PC-9 (cell line): ENCODE measurements at regions of chr2 and their contacts with region 1.

Region 1: DNA sequence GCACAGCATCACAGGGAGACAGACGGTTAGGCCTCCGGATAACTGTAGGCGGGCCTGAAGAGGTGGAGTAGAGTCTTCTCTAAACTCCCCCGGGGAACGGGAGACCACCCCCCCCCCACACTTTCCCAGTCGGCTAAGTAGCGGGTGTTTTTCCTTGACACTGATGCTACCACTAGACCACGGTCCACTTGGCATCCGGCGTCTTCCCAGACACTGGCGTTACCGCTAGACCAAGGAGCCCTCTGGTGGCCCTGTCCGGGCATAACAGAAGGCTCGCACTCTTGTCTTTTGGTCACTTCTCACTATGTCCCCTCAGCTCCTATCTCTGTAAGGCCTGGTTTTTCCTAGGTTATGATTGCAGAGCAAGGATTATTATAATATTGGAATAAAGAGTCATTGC is 25.7 kb upstream of the NCL start:
- DNase-seq: peak in 1 of 2 experiments; percentile 48
- H3K4me3 ChIP-seq: no peak overlapping the region
- H3K27ac ChIP-seq: no peak overlapping the region
- H3K4me1 ChIP-seq: no peaks in the 10 kb centered on the region
- H3K27me3 ChIP-seq: no peaks in the 10 kb centered on the region
- CTCF ChIP-seq: peak; percentile 54

Region 2: GRCh38 chr2:231475965-231476364 is 14.0 kb before region 1 on chr2:
- CTCF ChIA-PET with region 1: no interaction called
- POLR2A ChIA-PET with region 1: no interaction called
- intact Hi-C with region 1: no loop called
- DNase-seq: no peak
- H3K4me3 ChIP-seq: no peak overlapping the region
- H3K27ac ChIP-seq: no peak overlapping the region
- H3K4me1 ChIP-seq: no peaks in the 10 kb centered on the region
- H3K27me3 ChIP-seq: no peaks in the 10 kb centered on the region
- CTCF ChIP-seq: no peak

Region 3: DNA sequence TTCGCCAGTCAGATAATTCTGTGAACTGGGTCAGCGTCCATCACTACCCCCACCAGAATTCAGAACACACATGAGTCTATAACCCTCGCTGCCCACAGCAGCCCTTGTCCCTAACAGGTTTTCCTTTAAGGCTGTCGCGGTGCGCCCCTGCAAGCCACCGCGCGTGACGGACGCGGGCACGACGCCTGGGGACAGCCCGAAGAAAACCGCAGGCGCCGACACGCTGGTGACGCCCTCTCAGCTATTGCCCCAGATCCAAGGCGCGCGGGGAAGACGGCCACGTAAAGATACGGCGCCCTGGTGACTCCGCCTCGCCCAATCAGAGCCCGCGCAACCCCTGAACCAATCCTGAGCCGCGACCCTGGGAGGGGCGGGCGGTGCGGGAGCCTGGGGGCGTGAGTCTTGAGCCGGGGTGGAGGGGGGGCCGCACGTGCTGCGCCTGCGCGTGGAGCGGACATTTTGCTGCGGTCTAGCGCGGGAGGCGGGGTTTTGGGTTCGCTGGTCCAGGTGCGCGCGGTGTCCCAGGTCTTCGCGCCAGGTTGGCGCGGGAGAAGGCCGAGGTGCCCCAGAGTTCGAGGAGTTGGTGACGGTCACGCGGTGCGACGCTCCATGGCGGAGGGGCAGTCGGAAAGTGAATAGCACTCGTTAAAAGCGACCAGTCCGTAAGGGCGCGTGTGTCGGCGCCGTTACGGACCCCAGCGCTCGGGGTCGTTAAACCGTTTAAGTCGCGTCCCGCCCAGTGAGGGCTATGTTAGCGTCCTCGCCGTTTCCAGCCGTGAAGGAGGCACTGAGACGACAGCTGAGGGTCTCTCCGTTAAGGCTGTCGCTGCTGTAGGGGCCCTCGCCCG is 24.3 kb after region 1 on chr2:
- CTCF ChIA-PET with region 1: no interaction called
- POLR2A ChIA-PET with region 1: no interaction called
- intact Hi-C with region 1: no loop called
- DNase-seq: peak; percentile 85 to 98
- H3K4me3 ChIP-seq: peak overlapping the region; percentile 91
- H3K27ac ChIP-seq: peak overlapping the region; percentile 70
- H3K4me1 ChIP-seq: peaks cover 15% of the 10 kb centered on the region
- H3K27me3 ChIP-seq: no peaks in the 10 kb centered on the region
- CTCF ChIP-seq: no peak

Region 4: GRCh38 chr2:231573698-231574421 is 83.9 kb after region 1 on chr2:
- CTCF ChIA-PET with region 1: no interaction called
- POLR2A ChIA-PET with region 1: no interaction called
- intact Hi-C with region 1: no loop called
- DNase-seq: no peak
- H3K4me3 ChIP-seq: no peak overlapping the region
- H3K27ac ChIP-seq: no peak overlapping the region
- H3K4me1 ChIP-seq: no peaks in the 10 kb centered on the region
- H3K27me3 ChIP-seq: no peaks in the 10 kb centered on the region
- CTCF ChIP-seq: no peak

Region 5: GRCh38 chr2:232623783-232624727 is 1134.1 kb after region 1 on chr2:
- CTCF ChIA-PET with region 1: interaction called, 10 read pairs
- POLR2A ChIA-PET with region 1: no interaction called
- intact Hi-C with region 1: no loop called
- DNase-seq: peak; percentile 36 to 87
- H3K4me3 ChIP-seq: no peak overlapping the region; the same call in 1 of the 2 replicates
- H3K27ac ChIP-seq: peak overlapping the region; percentile 36
- H3K4me1 ChIP-seq: peaks cover 18% of the 10 kb centered on the region
- H3K27me3 ChIP-seq: no peaks in the 10 kb centered on the region
- CTCF ChIP-seq: no peak